HepG2 (cell line): ENCODE measurements at regions of chr6 and their contacts with region 1.

Region 1: DNA sequence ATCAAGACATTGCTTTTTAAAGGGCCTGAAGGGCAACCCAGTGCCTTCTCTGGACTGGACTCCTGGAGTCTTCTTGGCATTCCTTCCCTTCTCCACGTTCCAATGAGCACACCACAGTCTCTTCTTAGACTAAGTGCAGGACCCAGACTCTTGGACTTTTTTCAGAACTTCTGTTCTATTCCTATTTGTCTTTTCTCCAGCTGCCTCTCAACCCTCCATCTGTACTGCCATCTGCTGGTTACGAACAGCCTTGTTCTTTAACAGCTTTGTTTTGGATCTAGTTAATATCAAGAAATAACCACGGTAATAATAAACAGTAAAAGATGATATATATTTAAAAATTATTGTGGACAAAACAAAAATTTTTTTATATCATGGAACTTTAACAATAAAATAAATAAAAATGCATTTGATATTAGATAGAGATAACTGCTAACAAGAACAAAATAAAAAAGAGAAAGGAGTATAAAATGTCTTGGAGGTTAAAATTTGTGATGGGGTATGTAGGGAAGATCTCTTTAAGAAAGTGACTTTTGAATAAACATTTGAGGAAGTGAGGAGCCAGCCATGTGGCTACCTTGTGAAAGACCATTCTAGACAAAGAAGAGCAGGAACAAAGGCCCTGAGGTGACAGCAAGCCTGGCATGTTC is 105.1 kb upstream of the HCRTR2 start:
- DNase-seq: peak; percentile 49
- ATAC-seq: peak; percentile 69
- H3K4me3 ChIP-seq: no peak overlapping the region
- H3K27ac ChIP-seq: no peak overlapping the region
- H3K4me1 ChIP-seq: no peaks in the 10 kb centered on the region
- H3K27me3 ChIP-seq: no peaks in the 10 kb centered on the region
- CTCF ChIP-seq: peak; percentile 72
- EP300 ChIP-seq: no peak
- POLR2A ChIP-seq: no peak
- RAD21 ChIP-seq: peak; percentile 32; the same call in 1 of the 2 replicates

Region 2: GRCh38 chr6:53979468-53980067 is 1089.7 kb before region 1 on chr6:
- CTCF ChIA-PET with region 1: no interaction called
- POLR2A ChIA-PET with region 1: no interaction called
- in situ Hi-C with region 1: loop called (anchors 10 kb)
- intact Hi-C with region 1: loop called (anchors 1 kb)
- DNase-seq: peak; percentile 43
- ATAC-seq: no peak
- H3K4me3 ChIP-seq: no peak overlapping the region
- H3K27ac ChIP-seq: no peak overlapping the region
- H3K4me1 ChIP-seq: no peaks in the 10 kb centered on the region
- H3K27me3 ChIP-seq: no peaks in the 10 kb centered on the region
- CTCF ChIP-seq: peak; percentile 77
- EP300 ChIP-seq: no peak
- POLR2A ChIP-seq: no peak
- RAD21 ChIP-seq: peak; percentile 59; the same call in 1 of the 2 replicates

Region 3: GRCh38 chr6:54697424-54697823 is 371.8 kb before region 1 on chr6:
- CTCF ChIA-PET with region 1: no interaction called
- POLR2A ChIA-PET with region 1: no interaction called
- in situ Hi-C with region 1: no loop called
- intact Hi-C with region 1: loop called (anchors 1 kb)
- DNase-seq: no peak
- ATAC-seq: peak; percentile 31; the same call in 1 of the 3 replicates
- H3K4me3 ChIP-seq: no peak overlapping the region
- H3K27ac ChIP-seq: no peak overlapping the region
- H3K4me1 ChIP-seq: no peaks in the 10 kb centered on the region
- H3K27me3 ChIP-seq: no peaks in the 10 kb centered on the region
- CTCF ChIP-seq: no peak
- EP300 ChIP-seq: no peak
- POLR2A ChIP-seq: no peak
- RAD21 ChIP-seq: no peak

Region 4: DNA sequence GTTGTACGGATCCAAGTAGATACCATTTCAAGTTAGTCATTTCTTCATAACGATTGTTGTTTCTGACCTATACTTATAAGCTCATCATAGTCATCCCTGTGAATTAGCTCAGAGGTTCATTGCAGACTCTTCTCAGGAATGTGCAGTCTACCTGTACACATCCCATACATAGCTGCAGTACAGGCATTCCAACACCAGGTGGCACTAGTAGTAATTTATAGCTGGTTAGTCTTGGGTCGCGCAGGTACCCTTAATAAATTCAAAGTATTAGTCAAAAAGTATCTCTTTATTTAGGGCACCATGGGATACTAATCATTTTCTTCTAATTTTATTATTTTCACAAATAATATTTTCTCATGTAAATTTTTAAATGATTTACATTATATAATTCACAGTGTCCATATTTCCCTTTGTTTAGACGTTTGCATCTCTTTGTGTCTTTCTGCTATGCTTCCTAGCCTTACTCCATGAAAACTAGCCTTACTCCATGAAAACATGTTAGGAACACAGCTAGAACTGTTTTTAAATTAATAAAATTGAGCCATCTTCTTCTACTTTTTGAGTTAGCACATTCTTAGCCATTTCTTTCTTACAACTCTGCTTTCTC is 351.3 kb before region 1 on chr6:
- CTCF ChIA-PET with region 1: interaction called, 39 read pairs
- POLR2A ChIA-PET with region 1: no interaction called
- in situ Hi-C with region 1: loop called (anchors 10 kb)
- intact Hi-C with region 1: loop called (anchors 1 kb)
- DNase-seq: peak; percentile 77
- ATAC-seq: peak; percentile 92
- H3K4me3 ChIP-seq: no peak overlapping the region
- H3K27ac ChIP-seq: no peak overlapping the region
- H3K4me1 ChIP-seq: no peaks in the 10 kb centered on the region
- H3K27me3 ChIP-seq: no peaks in the 10 kb centered on the region
- CTCF ChIP-seq: peak; percentile 76
- EP300 ChIP-seq: no peak
- POLR2A ChIP-seq: no peak
- RAD21 ChIP-seq: no peak; the same call in 1 of the 2 replicates

Region 5: DNA sequence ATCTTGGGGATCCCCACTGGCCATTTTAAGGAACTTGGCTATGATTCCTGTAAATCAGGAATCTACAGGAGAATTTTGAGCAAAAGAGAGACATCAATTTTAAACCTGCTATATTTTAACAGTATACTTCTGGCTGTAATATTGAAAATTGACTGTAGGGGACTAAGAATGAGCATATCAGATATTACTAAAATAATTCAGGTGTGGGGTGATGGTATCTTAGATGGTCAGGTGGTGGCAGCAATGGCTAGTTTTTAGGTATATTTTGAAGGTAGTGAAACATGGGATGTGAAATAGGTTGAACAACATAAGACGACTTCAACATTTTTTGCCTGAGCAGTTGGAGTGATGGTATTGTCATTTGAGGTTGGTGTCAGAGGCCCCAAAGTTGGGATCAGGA is 190.6 kb before region 1 on chr6:
- CTCF ChIA-PET with region 1: interaction called, 15 read pairs
- POLR2A ChIA-PET with region 1: no interaction called
- in situ Hi-C with region 1: loop called (anchors 5 kb)
- intact Hi-C with region 1: loop called (anchors 1 kb)
- DNase-seq: peak; percentile 28
- ATAC-seq: peak; percentile 79
- H3K4me3 ChIP-seq: no peak overlapping the region
- H3K27ac ChIP-seq: no peak overlapping the region
- H3K4me1 ChIP-seq: no peaks in the 10 kb centered on the region
- H3K27me3 ChIP-seq: no peaks in the 10 kb centered on the region
- CTCF ChIP-seq: peak; percentile 55
- EP300 ChIP-seq: no peak
- POLR2A ChIP-seq: no peak
- RAD21 ChIP-seq: 0 out of 2 replicates have a peak, but pooled peaks have one; percentile 40